Lower lobe of right lung (tissue), 2 donors: ENCODE measurements at regions of chr15 and their contacts with region 1.

Region 1: DNA sequence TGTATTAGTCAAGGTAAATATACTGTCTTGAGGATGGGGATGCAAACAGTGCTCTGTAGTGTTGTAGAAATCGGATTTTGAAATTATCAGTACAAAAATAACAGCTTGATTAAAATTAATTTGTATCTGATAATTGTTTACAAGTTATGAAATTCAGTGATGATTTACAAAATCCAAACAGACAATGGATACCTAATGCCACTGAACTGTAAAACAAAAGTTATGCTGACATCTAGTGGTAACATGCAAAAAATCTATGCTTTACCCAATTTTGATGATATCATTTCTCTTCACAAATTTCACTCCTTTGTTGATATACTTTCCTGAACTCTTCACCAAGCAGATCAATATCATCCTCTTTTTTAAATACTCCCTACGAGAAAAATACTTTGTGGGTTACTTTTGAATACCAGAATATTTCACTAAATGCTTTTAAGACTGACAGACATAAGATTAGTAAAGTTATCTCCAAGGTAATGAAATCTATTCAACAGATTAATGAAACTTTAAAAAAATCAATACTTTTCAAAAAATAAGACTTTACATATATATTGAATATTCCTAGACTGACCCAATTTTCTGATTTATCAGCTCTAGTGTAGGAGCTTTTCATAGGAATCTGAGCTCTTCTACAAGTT is 36.0 kb downstream of the MNS1 start:
- DNase-seq: no peak
- ATAC-seq: no peak
- H3K4me3 ChIP-seq: no peak overlapping the region
- H3K27ac ChIP-seq: no peak overlapping the region
- H3K4me1 ChIP-seq: no peaks in the 10 kb centered on the region
- H3K27me3 ChIP-seq: no peaks in the 10 kb centered on the region
- CTCF ChIP-seq: peak; percentile 41

Region 2: DNA sequence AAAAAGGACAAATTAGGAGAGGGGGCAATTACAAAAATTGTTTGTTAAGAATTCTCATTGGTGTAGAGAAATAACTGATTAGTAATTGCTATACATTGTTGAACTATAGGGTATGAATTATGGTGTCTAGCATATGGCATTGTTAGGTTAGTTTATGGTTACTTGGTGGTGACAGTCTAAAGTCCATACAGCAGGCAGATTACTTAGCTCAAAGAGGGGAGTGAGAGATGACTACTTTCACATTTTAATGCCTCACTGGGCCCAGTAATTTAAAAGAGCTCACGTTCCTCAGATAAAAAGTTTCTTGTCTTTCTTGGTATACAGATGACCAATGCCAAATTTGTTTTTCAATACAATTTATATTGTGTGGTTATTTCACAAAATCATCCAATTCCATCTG is 323.1 kb before region 1 on chr15:
- intact Hi-C with region 1: no loop called
- DNase-seq: no peak
- ATAC-seq: no peak
- H3K4me3 ChIP-seq: no peak overlapping the region
- H3K27ac ChIP-seq: no peak overlapping the region
- H3K4me1 ChIP-seq: no peaks in the 10 kb centered on the region
- H3K27me3 ChIP-seq: no peaks in the 10 kb centered on the region
- CTCF ChIP-seq: no peak

Region 3: DNA sequence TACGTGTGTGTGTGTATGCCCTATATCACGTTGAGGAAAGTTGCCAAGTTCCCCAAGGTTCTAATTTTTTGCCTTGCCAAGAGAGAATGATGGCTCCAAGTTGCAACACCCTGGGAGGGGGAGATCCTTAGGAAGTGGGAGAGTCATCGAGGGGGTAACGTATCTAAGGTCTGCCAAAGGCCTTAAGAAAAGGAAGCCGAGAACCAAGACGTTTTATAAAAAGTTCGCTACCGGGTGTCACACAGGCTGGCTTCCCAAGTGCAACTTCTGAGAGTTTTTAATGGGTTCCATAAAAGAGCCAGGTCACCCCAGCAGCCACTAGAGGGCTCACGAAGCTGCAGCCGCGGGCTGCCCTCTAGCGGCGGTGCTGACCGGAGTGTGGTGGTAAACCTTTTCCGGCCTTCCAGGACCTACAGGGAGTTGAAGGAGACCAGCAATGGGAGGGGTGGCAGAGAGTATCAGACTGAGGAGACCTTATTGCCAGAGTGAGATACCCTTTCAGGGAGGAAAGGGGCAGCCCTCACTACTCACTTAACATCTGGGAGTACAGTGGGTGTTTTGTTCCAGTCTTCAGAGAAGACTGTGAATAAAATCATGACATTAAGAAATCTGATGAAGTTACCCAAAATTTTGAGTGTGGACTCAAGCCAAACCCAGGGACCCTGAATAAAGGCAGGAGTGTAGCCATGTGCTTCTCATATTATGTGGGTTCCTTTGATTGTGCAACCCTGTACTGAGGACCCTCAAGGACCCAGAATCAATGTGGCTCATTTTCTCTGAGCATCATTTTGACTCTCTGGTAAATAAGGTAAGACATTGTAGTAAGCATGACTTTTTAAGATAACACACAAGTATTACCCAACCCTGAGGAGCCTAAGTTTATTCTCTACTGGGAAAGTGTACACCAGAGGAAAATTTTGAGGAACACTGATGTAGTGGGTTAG is 182.8 kb before region 1 on chr15:
- intact Hi-C with region 1: loop called (anchors 10 kb)
- DNase-seq: peak; percentile 93
- ATAC-seq: peak; percentile 85 to 94
- H3K4me3 ChIP-seq: peak overlapping the region; percentile 42
- H3K27ac ChIP-seq: peak overlapping the region; percentile 52
- H3K4me1 ChIP-seq: peaks cover 30% of the 10 kb centered on the region
- H3K27me3 ChIP-seq: no peaks in the 10 kb centered on the region
- CTCF ChIP-seq: peak; percentile 100

Region 4: GRCh38 chr15:56325186-56325585 is 103.8 kb before region 1 on chr15:
- intact Hi-C with region 1: no loop called
- DNase-seq: no peak
- ATAC-seq: no peak
- H3K4me3 ChIP-seq: no peak overlapping the region
- H3K27ac ChIP-seq: no peak overlapping the region
- H3K4me1 ChIP-seq: no peaks in the 10 kb centered on the region
- H3K27me3 ChIP-seq: no peaks in the 10 kb centered on the region
- CTCF ChIP-seq: no peak